AG04450 (cell line): ENCODE measurements at regions of chr1 and their contacts with region 1.

Region 1: GRCh38 chr1:206489980-206490770 is 17.2 kb upstream of the RASSF5 start:
- DNase-seq: no peak
- H3K4me3 ChIP-seq: no peak overlapping the region
- H3K27ac ChIP-seq: no peak overlapping the region
- H3K27me3 ChIP-seq: no peaks in the 10 kb centered on the region
- CTCF ChIP-seq: peak; percentile 99

Region 2: GRCh38 chr1:206455666-206456344 is 34.4 kb before region 1 on chr1:
- CTCF ChIA-PET with region 1: no interaction called
- POLR2A ChIA-PET with region 1: no interaction called
- DNase-seq: no peak
- H3K4me3 ChIP-seq: no peak overlapping the region
- H3K27ac ChIP-seq: no peak overlapping the region
- H3K27me3 ChIP-seq: no peaks in the 10 kb centered on the region
- CTCF ChIP-seq: no peak

Region 3: GRCh38 chr1:206589206-206589605 is 99.0 kb after region 1 on chr1:
- CTCF ChIA-PET with region 1: interaction called, 86 read pairs
- POLR2A ChIA-PET with region 1: no interaction called
- DNase-seq: peak; percentile 92
- H3K4me3 ChIP-seq: no peak overlapping the region
- H3K27ac ChIP-seq: peak overlapping the region; percentile 77
- H3K27me3 ChIP-seq: no peaks in the 10 kb centered on the region
- CTCF ChIP-seq: no peak

Region 4: GRCh38 chr1:206865013-206865671 is 375.0 kb after region 1 on chr1 and contains the start of gene IL20:
- CTCF ChIA-PET with region 1: no interaction called
- POLR2A ChIA-PET with region 1: no interaction called
- DNase-seq: peak; percentile 50
- H3K4me3 ChIP-seq: no peak within 1 kb of the TSS
- H3K27ac ChIP-seq: no peak within 1 kb of the TSS
- H3K27me3 ChIP-seq: no peaks in the 10 kb centered on the region
- CTCF ChIP-seq: peak; percentile 90
- polyA plus RNA-seq, gene IL20: not detected in 2 replicates